CD8-positive, alpha-beta T cell (primary cell): ENCODE measurements at regions of chr2 and their contacts with region 1.

Region 1: GRCh38 chr2:84970868-84971509 is at the start of gene KCMF1:
- DNase-seq: peak; percentile 26 to 80 (median 69)
- ATAC-seq: peak; percentile 52
- H3K4me3 ChIP-seq: peak within 1 kb of the TSS; percentile 66 to 75
- H3K4me3 Mint-ChIP-seq: peak within 1 kb of the TSS; percentile 92
- H3K27ac ChIP-seq: peak within 1 kb of the TSS; percentile 74 to 78
- H3K27ac Mint-ChIP-seq: peak within 1 kb of the TSS; percentile 97
- H3K4me1 ChIP-seq: peaks cover 51% of the 10 kb centered on the region
- H3K4me1 Mint-ChIP-seq: peaks cover 61% of the 10 kb centered on the region
- H3K27me3 ChIP-seq: no peaks in the 10 kb centered on the region
- H3K27me3 Mint-ChIP-seq: no peaks in the 10 kb centered on the region
- CTCF ChIP-seq: no peak
- total RNA-seq, gene KCMF1: 85.3 to 89.5 TPM

Region 2: GRCh38 chr2:84516234-84516986 is 454.6 kb before region 1 on chr2 and contains the start of gene DNAH6:
- CTCF ChIA-PET with region 1: no interaction called
- POLR2A ChIA-PET with region 1: no interaction called
- intact Hi-C with region 1: loop called in 1 of 2 experiments (anchors 1 kb)
- DNase-seq: peak; percentile 71 to 95 (median 85)
- ATAC-seq: peak; percentile 98
- H3K4me3 ChIP-seq: peak within 1 kb of the TSS; percentile 45 to 49
- H3K4me3 Mint-ChIP-seq: peak within 1 kb of the TSS; percentile 89
- H3K27ac ChIP-seq: peak within 1 kb of the TSS; percentile 56 to 74
- H3K27ac Mint-ChIP-seq: peak within 1 kb of the TSS; percentile 85
- H3K4me1 ChIP-seq: peaks cover 9% of the 10 kb centered on the region
- H3K4me1 Mint-ChIP-seq: peaks cover 18% of the 10 kb centered on the region
- H3K27me3 ChIP-seq: no peaks in the 10 kb centered on the region
- H3K27me3 Mint-ChIP-seq: no peaks in the 10 kb centered on the region
- CTCF ChIP-seq: no peak
- total RNA-seq, gene DNAH6: 0.30 to 0.61 TPM

Region 3: GRCh38 chr2:84939426-84940087 is 31.4 kb before region 1 on chr2:
- CTCF ChIA-PET with region 1: interaction called, 11 read pairs
- POLR2A ChIA-PET with region 1: interaction called, 28 read pairs
- intact Hi-C with region 1: loop called (anchors 2 kb)
- DNase-seq: peak; percentile 33 to 93 (median 68)
- ATAC-seq: peak; percentile 85
- H3K4me3 ChIP-seq: peak overlapping the region; percentile 29
- H3K4me3 Mint-ChIP-seq: peak overlapping the region; percentile 73
- H3K27ac ChIP-seq: peak overlapping the region; percentile 43 to 86
- H3K27ac Mint-ChIP-seq: peak overlapping the region; percentile 94
- H3K4me1 ChIP-seq: peaks cover 23% of the 10 kb centered on the region
- H3K4me1 Mint-ChIP-seq: peaks cover 27% of the 10 kb centered on the region
- H3K27me3 ChIP-seq: no peaks in the 10 kb centered on the region
- H3K27me3 Mint-ChIP-seq: no peaks in the 10 kb centered on the region
- CTCF ChIP-seq: no peak

Region 4: GRCh38 chr2:85009019-85009618 is 38.1 kb after region 1 on chr2:
- CTCF ChIA-PET with region 1: no interaction called
- POLR2A ChIA-PET with region 1: interaction called, 4 read pairs
- intact Hi-C with region 1: loop called (anchors 1 to 2 kb)
- DNase-seq: peak in 2 of 9 experiments; percentile 0 to 19
- ATAC-seq: no peak
- H3K4me3 ChIP-seq: no peak overlapping the region
- H3K4me3 Mint-ChIP-seq: no peak overlapping the region
- H3K27ac ChIP-seq: no peak overlapping the region
- H3K27ac Mint-ChIP-seq: peak overlapping the region; percentile 72
- H3K4me1 ChIP-seq: peaks cover 33% of the 10 kb centered on the region
- H3K4me1 Mint-ChIP-seq: peaks cover 66% of the 10 kb centered on the region
- H3K27me3 ChIP-seq: no peaks in the 10 kb centered on the region
- H3K27me3 Mint-ChIP-seq: no peaks in the 10 kb centered on the region
- CTCF ChIP-seq: no peak

Region 5: GRCh38 chr2:85611705-85612587 is 641.0 kb after region 1 on chr2 and contains the start of gene C2orf68:
- CTCF ChIA-PET with region 1: no interaction called
- POLR2A ChIA-PET with region 1: no interaction called
- intact Hi-C with region 1: loop called in 1 of 2 experiments (anchors 10 kb)
- DNase-seq: peak; percentile 49 to 90 (median 83)
- ATAC-seq: peak; percentile 55
- H3K4me3 ChIP-seq: peak within 1 kb of the TSS; percentile 53 to 55
- H3K4me3 Mint-ChIP-seq: peak within 1 kb of the TSS; percentile 97
- H3K27ac ChIP-seq: peak within 1 kb of the TSS; percentile 61 to 70
- H3K27ac Mint-ChIP-seq: peak within 1 kb of the TSS; percentile 95
- H3K4me1 ChIP-seq: peaks cover 26% of the 10 kb centered on the region
- H3K4me1 Mint-ChIP-seq: peaks cover 39% of the 10 kb centered on the region
- H3K27me3 ChIP-seq: no peaks in the 10 kb centered on the region
- H3K27me3 Mint-ChIP-seq: no peaks in the 10 kb centered on the region
- CTCF ChIP-seq: no peak
- total RNA-seq, gene C2orf68: 23.2 to 27.9 TPM